Activated naive CD4-positive, alpha-beta T cell treated with anti-CD3 and anti-CD28 coated beads for 36 hours (primary cell): ENCODE measurements at regions of chr7 and their contacts with region 1.

Region 1: DNA sequence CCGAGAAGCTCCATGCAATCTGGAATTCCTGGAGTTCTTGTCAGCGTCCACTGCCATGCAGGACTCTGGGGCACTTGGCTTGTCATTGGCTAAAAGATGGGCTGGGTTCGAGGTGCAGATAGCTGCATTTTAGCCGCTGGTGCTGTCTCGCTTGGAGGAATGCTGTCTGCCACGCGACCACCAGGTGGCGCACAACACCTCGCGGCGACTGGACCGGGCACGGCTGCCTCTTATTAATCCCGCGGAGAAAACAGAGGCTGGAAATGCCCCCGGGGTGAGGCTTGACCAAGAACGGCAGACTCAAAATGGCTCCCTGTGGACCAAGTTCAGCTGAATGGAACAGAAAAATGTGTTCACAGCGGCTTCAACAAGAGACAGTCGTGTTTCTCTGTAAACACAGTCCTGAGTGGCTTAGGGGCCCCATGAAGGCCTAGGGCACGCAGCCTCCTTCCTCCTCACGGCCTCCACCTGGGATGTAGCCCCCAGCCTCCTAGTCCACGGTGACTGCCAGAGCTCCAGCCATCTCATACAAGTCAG is 46.2 kb downstream of the AOC1 start:
- DNase-seq: peak; percentile 86
- H3K4me3 Mint-ChIP-seq: no peak overlapping the region
- H3K27ac Mint-ChIP-seq: no peak overlapping the region
- H3K4me1 Mint-ChIP-seq: peaks cover 2% of the 10 kb centered on the region
- H3K27me3 Mint-ChIP-seq: peaks cover 20% of the 10 kb centered on the region

Region 2: DNA sequence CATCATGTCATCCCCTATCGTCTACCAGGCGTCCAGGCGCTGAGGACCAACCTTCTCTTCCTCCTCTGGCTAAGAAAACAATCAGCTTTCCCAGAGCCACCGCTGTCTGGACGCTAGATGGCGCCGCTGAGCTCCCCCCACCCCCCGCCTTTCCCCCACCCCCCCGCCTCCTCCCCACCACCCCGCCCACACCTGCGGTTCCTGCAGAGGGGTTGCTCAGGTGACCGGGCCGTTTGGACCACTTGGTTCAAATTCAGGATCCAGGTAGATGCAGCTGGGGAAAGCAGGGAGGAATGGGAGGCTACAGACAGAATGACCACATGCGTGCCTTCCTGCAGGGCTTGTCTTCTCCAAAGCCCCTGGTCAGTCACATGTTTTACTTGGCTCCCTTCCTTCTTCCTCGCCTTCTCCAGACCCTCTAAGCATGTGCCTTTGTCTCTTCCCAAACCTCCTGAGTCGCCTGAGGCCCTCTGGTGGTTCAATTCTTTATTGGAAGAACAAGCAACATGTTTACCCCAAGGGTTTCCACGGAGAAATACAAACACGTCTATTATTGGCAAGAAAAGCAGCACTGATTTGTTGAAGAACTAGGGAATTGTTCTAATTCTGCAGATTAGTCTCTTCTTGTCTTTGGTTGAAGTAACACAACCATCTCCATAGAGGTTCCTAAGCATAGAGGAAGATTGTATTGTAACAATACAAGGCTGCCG is 21.6 kb before region 1 on chr7:
- CTCF ChIA-PET with region 1: interaction called, 10 read pairs
- intact Hi-C with region 1: no loop called
- DNase-seq: peak; percentile 64
- H3K4me3 Mint-ChIP-seq: peak overlapping the region; percentile 48
- H3K27ac Mint-ChIP-seq: no peak overlapping the region
- H3K4me1 Mint-ChIP-seq: peaks cover 9% of the 10 kb centered on the region
- H3K27me3 Mint-ChIP-seq: no peaks in the 10 kb centered on the region

Region 3: GRCh38 chr7:150937848-150938561 is 39.5 kb after region 1 on chr7:
- CTCF ChIA-PET with region 1: interaction called, 8 read pairs
- intact Hi-C with region 1: loop called (anchors 5 kb)
- DNase-seq: peak; percentile 72
- H3K4me3 Mint-ChIP-seq: peak overlapping the region; percentile 46
- H3K27ac Mint-ChIP-seq: no peak overlapping the region
- H3K4me1 Mint-ChIP-seq: peaks cover 32% of the 10 kb centered on the region
- H3K27me3 Mint-ChIP-seq: no peaks in the 10 kb centered on the region

Region 4: GRCh38 chr7:150988230-150989226 is 90.0 kb after region 1 on chr7:
- CTCF ChIA-PET with region 1: interaction called, 46 read pairs
- intact Hi-C with region 1: loop called (anchors 1 kb)
- DNase-seq: peak; percentile 77
- H3K4me3 Mint-ChIP-seq: no peak overlapping the region
- H3K27ac Mint-ChIP-seq: no peak overlapping the region
- H3K4me1 Mint-ChIP-seq: peaks cover 25% of the 10 kb centered on the region
- H3K27me3 Mint-ChIP-seq: no peaks in the 10 kb centered on the region

Region 5: DNA sequence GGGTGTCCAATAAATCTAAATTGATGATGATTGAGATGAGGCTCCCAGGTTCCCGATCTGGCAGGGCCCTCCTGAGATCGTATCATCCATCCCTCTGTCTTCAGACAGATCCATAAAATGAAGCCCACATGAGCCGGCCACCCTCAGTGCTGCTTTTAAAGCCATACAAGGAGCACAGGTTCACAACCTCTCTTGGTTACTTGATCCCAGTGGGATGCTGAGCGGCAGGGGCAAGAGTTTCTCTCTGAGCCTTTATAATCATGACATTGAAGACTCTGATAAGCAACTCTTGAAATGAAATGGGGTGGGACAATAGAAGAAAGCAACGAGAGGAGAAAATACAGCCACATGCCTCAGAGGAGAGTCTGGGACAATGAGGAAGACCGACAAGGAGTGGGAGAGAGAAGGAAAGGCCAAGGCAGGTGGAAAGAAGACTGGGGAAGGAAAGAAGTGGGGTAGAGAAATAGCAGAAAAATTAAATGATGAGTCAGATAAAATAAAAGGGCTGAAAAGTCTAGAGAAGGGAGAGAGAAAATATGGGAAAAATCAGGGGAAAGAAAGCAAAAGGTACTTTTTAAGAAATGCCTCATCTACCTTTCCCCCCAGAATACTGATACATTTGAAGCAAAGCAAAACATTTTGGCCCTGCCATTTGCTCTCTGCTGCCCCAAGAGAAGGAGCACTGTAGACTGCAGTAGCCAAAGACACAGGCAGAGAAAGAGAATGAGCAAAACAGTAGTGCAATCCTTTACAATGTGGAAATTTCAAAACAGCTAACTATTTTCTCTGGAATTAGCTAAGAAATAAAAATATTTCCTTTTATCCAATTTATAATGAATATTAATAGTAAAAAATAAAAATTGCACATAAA is 254.3 kb after region 1 on chr7:
- CTCF ChIA-PET with region 1: no interaction called
- intact Hi-C with region 1: no loop called
- DNase-seq: no peak
- H3K4me3 Mint-ChIP-seq: no peak overlapping the region
- H3K27ac Mint-ChIP-seq: no peak overlapping the region
- H3K4me1 Mint-ChIP-seq: no peaks in the 10 kb centered on the region
- H3K27me3 Mint-ChIP-seq: peaks cover 22% of the 10 kb centered on the region

Region 6: GRCh38 chr7:151172273-151173141 is 274.0 kb after region 1 on chr7:
- CTCF ChIA-PET with region 1: no interaction called
- intact Hi-C with region 1: loop called (anchors 1 kb)
- DNase-seq: peak; percentile 81
- H3K4me3 Mint-ChIP-seq: no peak overlapping the region
- H3K27ac Mint-ChIP-seq: no peak overlapping the region
- H3K4me1 Mint-ChIP-seq: peaks cover 10% of the 10 kb centered on the region
- H3K27me3 Mint-ChIP-seq: peaks cover 51% of the 10 kb centered on the region